ENCODE measurements at regions of chr2 and their contacts with region 1.

Region 1: DNA sequence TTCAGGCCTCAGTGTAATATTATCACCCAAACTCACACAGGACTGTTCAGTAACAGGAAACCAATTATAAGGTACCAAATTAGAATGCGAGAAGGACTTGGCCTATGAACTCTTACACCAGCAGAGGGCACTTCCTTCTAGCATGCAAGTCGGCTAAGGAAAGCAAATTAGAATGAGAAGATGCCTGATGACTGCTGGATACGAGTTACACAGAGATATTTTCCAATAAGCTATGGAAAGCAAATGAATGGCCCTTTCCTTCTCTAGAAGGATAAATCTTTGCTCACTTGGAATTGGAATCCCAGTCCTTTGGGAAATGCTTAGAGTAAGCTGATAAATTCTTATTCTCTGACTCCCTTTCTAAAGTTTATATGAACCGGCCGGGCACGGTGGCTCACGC is 109.8 kb downstream of the AP1S3 start:
- DNase-seq: peak; percentile 60 to 88
- ATAC-seq: peak; percentile 41 to 52; a peak in 4 of 6 replicates
- H3K4me3 ChIP-seq: no peak overlapping the region
- H3K27ac ChIP-seq: peak overlapping the region; percentile 90 to 97
- H3K4me1 ChIP-seq: peaks cover 39% of the 10 kb centered on the region
- CTCF ChIP-seq: peak; percentile 77
- EP300 ChIP-seq: no peak
- POLR2A ChIP-seq: no peak
- RAD21 ChIP-seq: peak; percentile 70 to 80

Region 2: DNA sequence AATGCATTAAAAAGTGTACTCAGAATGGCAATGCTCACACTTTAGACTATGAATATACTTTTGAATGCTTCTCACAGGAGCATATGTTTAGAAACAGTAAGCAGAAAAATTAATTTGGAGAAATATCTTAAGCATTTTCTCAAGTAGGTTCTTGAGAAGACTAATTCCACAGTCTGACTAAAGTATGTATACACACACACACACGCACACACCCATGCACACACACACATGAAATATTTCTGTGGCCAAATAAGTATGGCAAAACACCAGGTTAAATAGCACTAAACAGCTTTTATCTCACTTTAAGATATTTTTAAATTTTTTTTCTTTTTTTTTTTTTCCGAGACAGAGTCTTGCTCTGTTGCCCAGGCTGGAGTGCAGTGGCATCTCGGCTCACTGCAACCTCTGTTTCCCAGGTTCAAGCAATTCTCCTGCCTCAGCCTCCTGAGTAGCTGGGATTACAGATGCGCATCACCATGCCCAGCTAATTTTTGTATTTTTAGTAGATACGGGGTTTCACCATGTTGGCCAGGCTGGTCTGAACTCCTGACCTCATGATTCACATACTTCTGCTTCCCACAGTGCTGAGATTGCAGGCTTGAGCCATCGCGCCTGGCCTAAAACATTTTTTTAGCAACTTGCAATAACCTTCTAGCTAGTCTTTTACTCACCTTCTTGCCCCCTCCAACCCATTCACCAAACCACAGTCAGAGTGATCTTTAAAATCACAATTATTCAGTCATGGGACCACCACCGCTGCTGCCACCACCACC is 57.9 kb before region 1 on chr2:
- CTCF ChIA-PET with region 1: no interaction called
- POLR2A ChIA-PET with region 1: no interaction called
- DNase-seq: no peak
- ATAC-seq: no peak; a peak in 1 of 6 replicates
- H3K4me3 ChIP-seq: no peak overlapping the region
- H3K27ac ChIP-seq: no peak overlapping the region
- H3K4me1 ChIP-seq: peaks cover 2% of the 10 kb centered on the region; the same call in 1 of the 3 replicates
- CTCF ChIP-seq: no peak
- EP300 ChIP-seq: no peak
- POLR2A ChIP-seq: no peak
- RAD21 ChIP-seq: no peak

Region 3: DNA sequence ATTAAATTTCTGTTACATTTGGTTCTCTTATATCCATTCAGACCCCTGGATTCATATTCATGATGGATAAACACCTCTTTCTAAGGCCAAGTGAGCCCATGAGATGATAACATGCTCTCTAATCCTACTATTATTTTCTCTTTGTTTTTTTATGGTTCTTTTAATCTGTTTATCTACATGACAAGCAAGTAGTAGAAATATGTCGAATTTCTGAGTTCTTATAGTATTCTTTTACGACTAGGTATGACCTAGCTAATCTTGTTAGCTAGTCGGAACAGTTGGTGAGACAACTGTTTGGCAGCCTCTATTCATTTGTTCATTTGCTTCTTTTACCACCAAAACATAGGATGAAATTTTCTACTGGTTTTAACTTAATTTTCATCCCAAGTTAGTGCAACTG is 27.3 kb before region 1 on chr2:
- CTCF ChIA-PET with region 1: interaction called, 10 read pairs
- POLR2A ChIA-PET with region 1: no interaction called
- DNase-seq: no peak
- ATAC-seq: no peak
- H3K4me3 ChIP-seq: no peak overlapping the region
- H3K27ac ChIP-seq: peak overlapping the region; percentile 94
- H3K4me1 ChIP-seq: peaks cover 49% of the 10 kb centered on the region
- CTCF ChIP-seq: no peak
- EP300 ChIP-seq: no peak
- POLR2A ChIP-seq: no peak
- RAD21 ChIP-seq: no peak

Region 4: GRCh38 chr2:223740679-223741078 is 13.1 kb after region 1 on chr2:
- CTCF ChIA-PET with region 1: interaction called, 17 read pairs
- POLR2A ChIA-PET with region 1: no interaction called
- DNase-seq: no peak
- ATAC-seq: peak in 1 of 2 experiments; percentile 23; a peak in 1 of 6 replicates
- H3K4me3 ChIP-seq: no peak overlapping the region
- H3K27ac ChIP-seq: peak overlapping the region in 1 of 2 experiments; percentile 58; a peak in 2 of 6 replicates
- H3K4me1 ChIP-seq: peaks cover 12% of the 10 kb centered on the region
- CTCF ChIP-seq: no peak
- EP300 ChIP-seq: no peak
- POLR2A ChIP-seq: no peak
- RAD21 ChIP-seq: no peak

Region 5: DNA sequence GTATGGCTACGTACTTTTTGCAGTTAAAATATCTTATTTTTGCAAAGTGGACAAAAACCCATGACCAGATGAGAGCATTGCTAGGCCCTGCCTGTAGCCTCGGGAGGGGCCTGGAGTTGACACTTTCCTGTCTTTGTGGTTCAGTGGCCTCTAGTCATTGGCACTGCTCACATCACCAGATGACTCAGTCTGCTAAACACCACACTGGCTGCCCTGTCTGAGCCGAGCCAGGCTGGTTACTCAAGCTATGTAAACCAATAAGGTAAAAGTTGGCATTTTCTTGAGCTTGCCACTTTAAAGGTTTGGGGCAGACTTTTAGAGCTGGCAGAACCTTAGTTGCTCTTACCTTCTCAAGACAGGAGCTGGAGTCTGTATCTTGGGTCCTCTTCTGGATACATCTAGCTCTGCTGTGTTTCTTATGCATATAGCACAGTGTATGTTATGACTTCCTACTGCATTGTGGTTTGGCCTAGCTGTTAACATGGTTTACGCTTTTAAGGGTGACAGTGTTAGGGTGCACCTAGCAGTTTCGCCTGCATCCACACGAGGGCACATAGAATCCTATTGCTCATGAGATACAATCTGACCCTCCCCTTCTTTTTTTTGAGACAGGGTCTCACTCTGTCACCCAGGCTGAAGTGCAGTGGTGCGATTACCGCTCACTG is 33.4 kb after region 1 on chr2:
- CTCF ChIA-PET with region 1: interaction called, 9 read pairs
- POLR2A ChIA-PET with region 1: interaction called, 17 read pairs
- DNase-seq: peak; percentile 42 to 90
- ATAC-seq: peak; percentile 94 to 96
- H3K4me3 ChIP-seq: no peak overlapping the region
- H3K27ac ChIP-seq: peak overlapping the region; percentile 94 to 96
- H3K4me1 ChIP-seq: peaks cover 57% of the 10 kb centered on the region
- CTCF ChIP-seq: peak; percentile 47
- EP300 ChIP-seq: peak in 1 of 2 experiments; percentile 43; a peak in 1 of 5 replicates
- POLR2A ChIP-seq: no peak
- RAD21 ChIP-seq: peak; percentile 31 to 42; a peak in 4 of 5 replicates

Measured in A549 (cell line).